ENCODE measurements at regions of chr2 and their contacts with region 1.

Region 1: GRCh38 chr2:62195421-62196277 is at the start of gene B3GNT2:
- DNase-seq: peak; percentile 80 to 91
- ATAC-seq: peak; percentile 80 to 91 (median 85)
- H3K4me3 ChIP-seq: peak within 1 kb of the TSS; percentile 100
- H3K4me3 Mint-ChIP-seq: peak within 1 kb of the TSS; percentile 95
- H3K27ac ChIP-seq: peak within 1 kb of the TSS; percentile 81
- H3K27ac Mint-ChIP-seq: peak within 1 kb of the TSS; percentile 88 to 94
- H3K4me1 ChIP-seq: peaks cover 28% of the 10 kb centered on the region
- H3K4me1 Mint-ChIP-seq: peaks cover 32 to 33% of the 10 kb centered on the region in 2 donors
- H3K27me3 ChIP-seq: no peaks in the 10 kb centered on the region
- H3K27me3 Mint-ChIP-seq: no peaks in the 10 kb centered on the region
- CTCF ChIP-seq: no peak
- total RNA-seq, gene B3GNT2: 51.9 to 68.0 (median 54.0) TPM

Region 2: DNA sequence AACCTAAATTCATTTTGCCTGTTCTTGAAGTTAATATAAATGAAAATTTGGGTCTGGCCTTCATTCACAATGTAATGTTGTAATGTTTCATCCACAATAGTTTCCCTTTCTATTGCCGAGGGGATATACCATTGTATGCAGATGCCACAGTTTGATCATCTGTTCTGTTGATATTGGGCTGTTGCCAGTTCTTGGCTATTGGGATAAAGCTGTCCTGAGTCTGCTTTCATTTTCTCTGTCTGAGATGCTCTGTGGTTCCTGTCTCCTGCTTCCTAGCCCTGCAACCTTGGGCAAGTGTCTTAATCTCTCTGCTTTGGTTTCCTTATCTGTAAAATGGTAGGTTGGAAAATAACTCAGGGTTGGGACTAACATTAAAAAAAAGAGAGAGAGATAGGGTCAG is 25.5 kb after region 1 on chr2:
- intact Hi-C with region 1: loop called (anchors 2 kb)
- DNase-seq: peak in 1 of 2 donors; percentile 36
- ATAC-seq: no peak
- H3K4me3 ChIP-seq: no peak overlapping the region
- H3K4me3 Mint-ChIP-seq: peak overlapping the region; percentile 18
- H3K27ac ChIP-seq: no peak overlapping the region
- H3K27ac Mint-ChIP-seq: peak overlapping the region; percentile 86 to 93
- H3K4me1 ChIP-seq: peaks cover 48% of the 10 kb centered on the region
- H3K4me1 Mint-ChIP-seq: peaks cover 81 to 84% of the 10 kb centered on the region in 2 donors
- H3K27me3 ChIP-seq: no peaks in the 10 kb centered on the region
- H3K27me3 Mint-ChIP-seq: no peaks in the 10 kb centered on the region
- CTCF ChIP-seq: no peak

Region 3: DNA sequence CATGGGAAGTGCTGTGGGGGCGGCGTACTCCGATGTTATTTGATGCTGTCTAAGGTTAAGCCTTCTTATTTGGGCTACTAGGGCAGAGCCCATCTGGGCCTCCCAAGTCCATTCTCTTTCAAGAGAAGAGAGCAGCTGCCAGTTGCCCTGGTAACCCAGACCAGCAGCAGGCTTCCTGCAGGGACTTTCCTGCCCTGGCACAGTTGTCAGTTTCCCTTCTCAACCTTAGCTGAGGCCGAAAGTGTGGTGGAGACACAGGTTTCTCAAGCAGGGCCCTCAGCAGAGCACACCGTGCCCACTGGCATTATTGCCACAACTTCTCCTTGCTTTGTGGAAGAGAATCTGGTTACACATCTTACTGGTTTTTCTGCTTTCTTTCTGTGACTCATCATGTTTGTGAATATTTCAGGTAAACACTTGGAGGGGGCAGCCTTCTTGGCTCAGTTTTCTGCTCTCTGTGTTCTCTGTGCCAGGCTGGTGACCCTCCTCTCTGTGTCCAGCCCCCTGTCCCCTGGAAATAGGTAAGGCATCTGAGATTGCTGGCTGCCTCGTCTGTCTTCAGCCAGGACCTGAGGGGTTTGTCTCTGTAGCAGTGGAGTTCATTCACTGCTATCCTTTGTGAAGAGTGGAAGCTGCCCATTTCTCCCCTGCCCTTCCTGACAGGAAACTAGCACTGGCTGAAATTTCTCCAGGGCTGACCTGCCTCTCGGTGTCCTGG is 111.3 kb after region 1 on chr2:
- intact Hi-C with region 1: loop called (anchors 5 kb)
- DNase-seq: peak in 1 of 2 donors; percentile 76
- ATAC-seq: peak; percentile 38 to 70 (median 62)
- H3K4me3 ChIP-seq: no peak overlapping the region
- H3K4me3 Mint-ChIP-seq: no peak overlapping the region
- H3K27ac ChIP-seq: peak overlapping the region; percentile 39
- H3K27ac Mint-ChIP-seq: peak overlapping the region; percentile 88 to 91
- H3K4me1 ChIP-seq: peaks cover 84% of the 10 kb centered on the region
- H3K4me1 Mint-ChIP-seq: peaks cover 79 to 82% of the 10 kb centered on the region in 2 donors
- H3K27me3 ChIP-seq: no peaks in the 10 kb centered on the region
- H3K27me3 Mint-ChIP-seq: no peaks in the 10 kb centered on the region
- CTCF ChIP-seq: no peak